Heart left ventricle (tissue), 16 donors: ENCODE measurements at regions of chr11 and their contacts with region 1.

Region 1: GRCh38 chr11:92775003-92775676 is 194.3 kb upstream of the MTNR1B start:
- DNase-seq: no peak
- ATAC-seq: no peak
- H3K4me3 ChIP-seq: no peak overlapping the region
- H3K27ac ChIP-seq: no peak overlapping the region
- H3K4me1 ChIP-seq: peaks cover 0 to 11% (median 0%) of the 10 kb centered on the region in 12 donors
- H3K27me3 ChIP-seq: no peaks in the 10 kb centered on the region
- CTCF ChIP-seq: no peak
- POLR2A ChIP-seq: no peak

Region 2: DNA sequence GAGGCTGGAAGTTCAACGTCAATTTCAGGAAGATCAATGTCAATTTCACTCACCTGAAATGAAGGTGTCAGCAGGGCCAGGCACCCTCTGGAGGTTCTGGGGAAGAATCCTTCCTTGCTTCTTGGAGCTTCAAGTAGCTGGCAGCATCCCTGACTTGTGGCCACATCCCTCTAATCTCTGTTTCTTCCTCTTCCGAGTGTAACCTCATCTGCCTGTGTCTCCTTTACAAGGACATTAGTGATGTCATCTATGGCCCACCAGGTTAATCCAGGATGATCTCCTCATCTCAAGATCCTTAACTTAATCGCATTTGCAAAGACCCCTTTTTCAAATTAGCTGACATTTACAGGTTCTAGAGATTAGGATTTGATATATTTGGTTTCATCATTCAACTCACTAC is 46.5 kb before region 1 on chr11:
- intact Hi-C with region 1: loop called in 1 of 10 experiments (anchors 10 kb)
- DNase-seq: no peak
- ATAC-seq: no peak
- H3K4me3 ChIP-seq: no peak overlapping the region
- H3K27ac ChIP-seq: no peak overlapping the region
- H3K4me1 ChIP-seq: peaks cover 0 to 3% (median 0%) of the 10 kb centered on the region in 12 donors
- H3K27me3 ChIP-seq: no peaks in the 10 kb centered on the region
- CTCF ChIP-seq: no peak
- POLR2A ChIP-seq: no peak